Ovary (tissue), 10 donors: ENCODE measurements at regions of chr2 and their contacts with region 1.

Region 1: DNA sequence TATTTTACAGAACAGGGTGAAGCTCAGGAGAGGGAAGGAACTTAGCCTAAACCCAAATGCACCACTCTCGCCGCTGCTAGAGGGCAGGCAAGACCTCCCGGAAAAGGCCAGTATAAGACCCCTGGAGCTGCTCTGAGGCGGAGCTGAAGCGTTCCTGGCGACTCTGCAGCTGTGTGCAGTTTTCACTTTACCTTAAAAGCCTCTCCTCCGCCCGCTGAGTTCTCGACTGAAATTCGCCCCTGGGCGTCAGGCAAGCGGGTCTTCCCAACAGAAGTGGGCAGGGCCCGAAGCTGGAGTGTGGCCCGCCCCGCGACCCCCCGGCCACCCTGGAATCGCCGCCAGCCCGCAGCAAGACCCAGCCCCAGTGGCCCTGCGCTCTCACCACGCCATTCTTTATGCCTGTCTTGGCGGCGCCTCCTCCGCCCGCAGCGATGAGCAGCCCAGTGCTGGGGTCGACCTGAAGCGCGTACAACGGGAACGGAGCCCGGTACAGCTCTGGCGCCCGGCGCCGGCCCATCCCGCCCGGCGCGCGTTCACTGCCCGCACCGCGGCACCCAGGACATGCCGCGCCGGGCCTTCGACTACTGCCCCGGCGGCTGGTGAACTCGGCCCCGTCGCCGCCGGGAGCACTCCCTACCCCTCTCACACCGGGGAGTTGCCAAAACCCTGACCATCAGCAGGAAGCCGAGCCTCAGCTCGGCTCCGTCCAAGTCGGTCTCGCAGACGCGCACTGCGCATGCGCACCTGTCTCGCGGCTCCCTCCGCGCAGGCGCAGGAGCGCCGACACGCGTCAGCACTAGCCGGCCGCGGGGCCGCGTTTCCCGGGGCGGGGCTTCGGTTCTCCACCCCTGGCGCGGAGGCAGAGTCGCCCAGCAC is at the start of gene PREB:
- DNase-seq: peak; percentile 97 to 99 (median 99)
- H3K4me3 ChIP-seq: peak within 1 kb of the TSS; percentile 89
- H3K27ac ChIP-seq: peak within 1 kb of the TSS; percentile 66 to 83
- H3K4me1 ChIP-seq: peaks cover 6% of the 10 kb centered on the region
- H3K27me3 ChIP-seq: no peaks in the 10 kb centered on the region
- CTCF ChIP-seq: peak; percentile 17 to 51 (median 46)
- EP300 ChIP-seq: no peak
- POLR2A ChIP-seq: peak; percentile 89
- total RNA-seq, gene PREB: 42.7 to 113 (median 70.8) TPM

Region 2: GRCh38 chr2:27185331-27186026 is 51.3 kb after region 1 on chr2:
- intact Hi-C with region 1: loop called in 3 of 4 experiments (anchors 5 kb)
- DNase-seq: peak in 1 of 5 donors; percentile 49
- H3K4me3 ChIP-seq: no peak overlapping the region
- H3K27ac ChIP-seq: peak overlapping the region; percentile 46 to 79
- H3K4me1 ChIP-seq: peaks cover 22% of the 10 kb centered on the region
- H3K27me3 ChIP-seq: no peaks in the 10 kb centered on the region
- CTCF ChIP-seq: no peak
- EP300 ChIP-seq: peak; percentile 78
- POLR2A ChIP-seq: no peak